ENCODE measurements at regions of chrX and their contacts with region 1.

Region 1: GRCh38 chrX:140141444-140142029 is 176.2 kb upstream of the CXorf66 start:
- DNase-seq: no peak
- H3K4me3 ChIP-seq: no peak overlapping the region
- H3K27ac ChIP-seq: no peak overlapping the region
- H3K4me1 ChIP-seq: no peaks in the 10 kb centered on the region
- H3K27me3 ChIP-seq: no peaks in the 10 kb centered on the region
- CTCF ChIP-seq: peak in 5 of 6 experiments; percentile 20 to 56 (median 39)
- POLR2A ChIP-seq: no peak

Region 2: GRCh38 chrX:140071037-140071436 is 70.5 kb before region 1 on chrX:
- intact Hi-C with region 1: loop called (anchors 2 kb)
- DNase-seq: no peak
- H3K4me3 ChIP-seq: no peak overlapping the region
- H3K27ac ChIP-seq: no peak overlapping the region
- H3K4me1 ChIP-seq: no peaks in the 10 kb centered on the region
- H3K27me3 ChIP-seq: no peaks in the 10 kb centered on the region
- CTCF ChIP-seq: no peak
- POLR2A ChIP-seq: no peak

Region 3: DNA sequence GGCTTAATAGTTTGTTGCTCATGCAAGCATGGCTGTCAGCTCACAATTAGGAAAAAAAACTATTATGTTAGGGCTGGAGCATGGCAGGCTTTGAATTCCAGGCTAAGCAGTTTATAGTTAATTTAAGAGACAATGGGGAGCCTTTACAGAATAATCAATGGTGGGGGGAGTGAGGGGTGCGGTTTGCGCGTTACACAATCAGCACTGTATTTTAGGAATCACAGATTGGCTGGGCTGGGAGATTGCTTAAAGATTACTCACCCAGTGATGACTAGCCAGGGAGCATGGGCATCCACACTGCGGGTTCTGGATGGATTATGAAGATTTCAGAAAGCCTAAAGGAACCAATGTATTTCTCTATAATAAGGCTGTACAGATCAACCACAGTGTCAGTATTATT is 176.8 kb after region 1 on chrX:
- intact Hi-C with region 1: no loop called
- DNase-seq: no peak
- H3K4me3 ChIP-seq: no peak overlapping the region
- H3K27ac ChIP-seq: no peak overlapping the region
- H3K4me1 ChIP-seq: no peaks in the 10 kb centered on the region
- H3K27me3 ChIP-seq: no peaks in the 10 kb centered on the region
- CTCF ChIP-seq: no peak
- POLR2A ChIP-seq: no peak